ENCODE measurements at regions of chr9 and their contacts with region 1.

Region 1: DNA sequence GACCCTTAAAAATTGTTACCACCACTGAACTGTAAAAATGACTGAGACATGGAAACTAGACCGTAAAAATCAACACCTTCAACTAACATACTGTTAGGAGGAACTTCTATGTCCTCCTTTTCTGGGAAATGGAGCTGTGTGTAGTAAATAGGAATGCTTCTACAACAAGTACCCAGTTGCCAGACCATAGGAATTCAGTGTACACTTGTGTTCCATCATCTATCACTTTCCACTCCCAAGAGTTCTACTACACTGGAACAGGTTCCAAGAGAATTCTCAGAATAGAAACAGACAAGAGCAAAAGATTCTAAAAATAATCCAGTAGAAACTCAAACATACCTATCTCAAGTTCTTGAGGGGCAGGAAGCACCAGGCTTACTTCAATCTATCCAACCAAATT is 23.6 kb downstream of the UBAP2 start:
- DNase-seq: no peak
- H3K4me3 ChIP-seq: no peak overlapping the region
- H3K27ac ChIP-seq: peak overlapping the region; percentile 59
- H3K4me1 ChIP-seq: peaks cover 18% of the 10 kb centered on the region
- H3K27me3 ChIP-seq: no peaks in the 10 kb centered on the region
- CTCF ChIP-seq: no peak
- POLR2A ChIP-seq: no peak

Region 2: GRCh38 chr9:33924978-33925797 is 99.9 kb before region 1 on chr9:
- CTCF ChIA-PET with region 1: interaction called, 3 read pairs
- POLR2A ChIA-PET with region 1: no interaction called
- dilution Hi-C with region 1: no loop called
- intact Hi-C with region 1: loop called (anchors 1 kb)
- DNase-seq: peak; percentile 61
- H3K4me3 ChIP-seq: no peak overlapping the region
- H3K27ac ChIP-seq: no peak overlapping the region
- H3K4me1 ChIP-seq: no peaks in the 10 kb centered on the region
- H3K27me3 ChIP-seq: no peaks in the 10 kb centered on the region
- CTCF ChIP-seq: peak; percentile 70 to 79
- POLR2A ChIP-seq: no peak

Region 3: GRCh38 chr9:34048923-34049697 is 24.0 kb after region 1 on chr9:
- CTCF ChIA-PET with region 1: no interaction called
- POLR2A ChIA-PET with region 1: no interaction called
- dilution Hi-C with region 1: no loop called
- intact Hi-C with region 1: loop called (anchors 2 kb)
- DNase-seq: peak; percentile 99
- H3K4me3 ChIP-seq: peak overlapping the region; percentile 70 to 86 (median 81)
- H3K27ac ChIP-seq: peak overlapping the region; percentile 77
- H3K4me1 ChIP-seq: peaks cover 22% of the 10 kb centered on the region
- H3K27me3 ChIP-seq: no peaks in the 10 kb centered on the region
- CTCF ChIP-seq: no peak
- POLR2A ChIP-seq: peak; percentile 32

Measured in endothelial cell of umbilical vein (primary cell).